GM10248 (cell line): ENCODE measurements at regions of chr11 and their contacts with region 1.

Region 1: DNA sequence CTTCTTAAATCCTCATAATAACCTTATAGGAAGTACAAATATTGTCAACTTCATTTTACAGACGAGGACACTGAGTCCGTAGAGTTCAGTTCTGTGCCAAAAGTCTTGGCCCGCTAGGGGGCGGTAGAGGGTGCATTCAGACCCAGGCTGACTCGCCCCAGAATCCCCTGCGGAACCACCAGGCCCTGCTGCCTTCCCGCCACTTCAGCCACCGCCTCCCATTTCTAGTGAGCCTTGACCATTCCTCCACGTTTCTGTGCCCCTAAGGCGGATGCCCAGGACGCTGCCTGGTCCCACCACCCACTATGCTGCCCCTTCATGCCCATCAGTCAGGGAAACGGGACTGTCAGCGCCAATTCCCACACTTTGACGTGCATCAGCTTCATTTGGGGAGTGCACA is 19.1 kb downstream of the SYT13 start:
- DNase-seq: no peak
- CTCF ChIP-seq: peak; percentile 16

Region 2: DNA sequence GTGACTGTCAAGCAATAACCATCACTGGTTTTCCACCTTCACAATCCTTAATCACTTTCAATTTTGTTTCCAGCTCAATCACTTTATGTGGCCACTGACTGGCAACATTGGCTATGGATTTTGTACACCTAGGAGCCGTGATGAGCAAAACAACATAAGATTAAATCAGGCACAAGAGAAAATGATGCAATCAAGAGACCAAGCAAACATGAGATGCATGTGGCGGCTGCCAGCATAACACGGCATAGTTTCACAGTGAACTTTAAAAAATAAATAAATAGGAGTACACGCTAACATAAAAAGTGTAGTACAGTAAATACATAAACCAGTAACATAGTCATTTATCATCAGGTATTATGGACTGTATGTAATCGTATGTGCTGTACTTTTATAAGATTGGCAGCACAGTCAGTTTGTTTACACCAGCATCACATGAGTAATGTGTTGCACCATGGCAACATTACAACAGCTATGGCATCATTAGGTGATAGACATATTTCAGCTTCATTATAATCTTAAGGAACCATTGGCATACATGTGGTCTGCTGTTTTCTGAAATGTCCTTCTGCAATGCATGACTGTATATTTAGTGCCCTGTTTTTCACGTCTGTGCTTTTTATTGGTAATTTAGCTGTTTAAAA is 204.0 kb before region 1 on chr11:
- CTCF ChIA-PET with region 1: no interaction called
- POLR2A ChIA-PET with region 1: no interaction called
- DNase-seq: no peak
- CTCF ChIP-seq: no peak

Region 3: GRCh38 chr11:45252134-45252855 is 14.8 kb before region 1 on chr11:
- CTCF ChIA-PET with region 1: interaction called, 19 read pairs
- POLR2A ChIA-PET with region 1: no interaction called
- DNase-seq: peak; percentile 57
- CTCF ChIP-seq: peak; percentile 57